ENCODE measurements at regions of chr19 and their contacts with region 1.

Region 1: DNA sequence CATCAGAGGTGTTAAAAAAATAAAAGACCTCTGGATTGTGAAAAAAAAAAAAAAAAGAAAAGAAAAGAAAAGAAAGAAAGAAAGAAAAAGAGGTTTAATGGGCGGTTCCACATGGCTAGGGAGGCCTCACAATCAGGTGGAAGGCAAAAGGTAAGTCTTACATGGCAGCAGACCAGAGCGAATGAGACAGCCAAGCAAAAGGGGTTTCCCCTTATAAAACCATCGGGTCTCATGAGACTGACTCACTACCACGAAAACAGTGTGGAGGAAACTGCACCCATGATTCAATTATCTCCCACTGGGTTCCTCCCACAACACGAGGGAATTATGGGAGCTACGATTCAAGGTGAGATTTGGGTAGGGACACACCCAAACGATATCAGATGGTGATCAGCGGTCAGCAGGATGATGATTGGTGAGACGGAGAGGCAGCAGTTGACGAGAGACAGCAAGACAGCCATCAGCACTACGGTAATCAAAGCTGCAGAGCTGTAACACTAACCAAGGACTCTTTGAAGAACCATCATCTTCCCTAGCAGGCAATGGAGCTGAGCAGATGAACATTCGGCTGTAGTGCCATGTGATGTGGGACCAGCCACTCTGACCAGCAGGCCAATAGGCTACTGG is 3.9 kb upstream of the CD209 start:
- DNase-seq: peak; percentile 56
- ATAC-seq: peak; percentile 83
- H3K4me3 ChIP-seq: no peak overlapping the region
- H3K27ac ChIP-seq: no peak overlapping the region
- H3K4me1 ChIP-seq: peaks cover 3% of the 10 kb centered on the region; the same call in 1 of the 2 replicates
- H3K27me3 ChIP-seq: no peaks in the 10 kb centered on the region
- CTCF ChIP-seq: no peak
- EP300 ChIP-seq: no peak
- POLR2A ChIP-seq: no peak
- RAD21 ChIP-seq: no peak

Region 2: GRCh38 chr19:7355151-7355820 is 396.0 kb before region 1 on chr19:
- CTCF ChIA-PET with region 1: no interaction called
- POLR2A ChIA-PET with region 1: no interaction called
- RAD21 ChIA-PET with region 1: no interaction called
- SMC1A ChIA-PET with region 1: no interaction called
- in situ Hi-C with region 1: no loop called
- intact Hi-C with region 1: no loop called
- DNase-seq: no peak
- ATAC-seq: peak; percentile 10; the same call in 2 of the 3 replicates
- H3K4me3 ChIP-seq: no peak overlapping the region
- H3K27ac ChIP-seq: no peak overlapping the region
- H3K4me1 ChIP-seq: peaks cover 11% of the 10 kb centered on the region
- H3K27me3 ChIP-seq: no peaks in the 10 kb centered on the region
- CTCF ChIP-seq: no peak
- EP300 ChIP-seq: no peak
- POLR2A ChIP-seq: no peak
- RAD21 ChIP-seq: no peak

Region 3: GRCh38 chr19:7692417-7693088 is 58.7 kb before region 1 on chr19:
- CTCF ChIA-PET with region 1: no interaction called
- POLR2A ChIA-PET with region 1: no interaction called
- RAD21 ChIA-PET with region 1: no interaction called
- SMC1A ChIA-PET with region 1: interaction called, 3 read pairs
- in situ Hi-C with region 1: no loop called
- intact Hi-C with region 1: loop called (anchors 5 kb)
- DNase-seq: no peak
- ATAC-seq: peak; percentile 11
- H3K4me3 ChIP-seq: peak overlapping the region; percentile 37; the same call in 1 of the 2 replicates
- H3K27ac ChIP-seq: no peak overlapping the region; the same call in 1 of the 2 replicates
- H3K4me1 ChIP-seq: peaks cover 35% of the 10 kb centered on the region
- H3K27me3 ChIP-seq: no peaks in the 10 kb centered on the region
- CTCF ChIP-seq: no peak
- EP300 ChIP-seq: peak; percentile 73 to 82; a peak in 3 of 4 replicates
- POLR2A ChIP-seq: peak; percentile 50; the same call in 1 of the 2 replicates
- RAD21 ChIP-seq: no peak